Endothelial cell of umbilical vein (primary cell): ENCODE measurements at regions of chr16 and their contacts with region 1.

Region 1: DNA sequence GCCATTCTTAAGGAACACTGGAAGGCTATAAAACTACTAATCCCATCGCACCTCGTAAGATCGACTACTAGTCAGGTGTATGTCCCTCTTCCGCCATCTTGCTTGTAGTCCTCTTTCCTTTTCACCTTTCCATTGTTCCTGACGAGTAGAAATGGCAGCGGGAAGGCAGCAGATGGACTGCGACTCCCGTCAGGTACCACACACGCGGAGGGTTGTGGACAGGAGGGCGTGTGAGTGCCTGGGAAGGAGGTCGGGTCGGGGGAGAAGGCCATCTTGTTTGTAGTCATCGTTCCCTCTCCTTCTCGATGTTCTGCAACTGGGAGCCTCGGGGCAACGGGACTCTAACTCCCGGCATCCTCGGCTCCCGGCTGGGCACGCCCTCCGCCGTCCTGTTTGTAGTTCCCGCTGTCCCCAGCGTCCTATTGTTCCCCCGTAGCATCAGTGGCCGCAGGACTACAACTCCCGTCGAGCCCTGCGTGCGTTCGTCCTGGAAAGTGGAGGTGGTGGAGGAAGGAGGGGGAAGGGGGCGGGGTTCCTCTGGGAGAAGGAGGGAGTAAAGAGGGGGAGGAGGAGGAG is 324 bp upstream of the FBXL19 start:
- DNase-seq: peak; percentile 100
- H3K4me3 ChIP-seq: peak overlapping the region; percentile 3 to 87 (median 65)
- H3K27ac ChIP-seq: peak overlapping the region; percentile 66
- H3K4me1 ChIP-seq: peaks cover 2% of the 10 kb centered on the region
- H3K27me3 ChIP-seq: no peaks in the 10 kb centered on the region
- CTCF ChIP-seq: no peak
- POLR2A ChIP-seq: peak; percentile 9

Region 2: DNA sequence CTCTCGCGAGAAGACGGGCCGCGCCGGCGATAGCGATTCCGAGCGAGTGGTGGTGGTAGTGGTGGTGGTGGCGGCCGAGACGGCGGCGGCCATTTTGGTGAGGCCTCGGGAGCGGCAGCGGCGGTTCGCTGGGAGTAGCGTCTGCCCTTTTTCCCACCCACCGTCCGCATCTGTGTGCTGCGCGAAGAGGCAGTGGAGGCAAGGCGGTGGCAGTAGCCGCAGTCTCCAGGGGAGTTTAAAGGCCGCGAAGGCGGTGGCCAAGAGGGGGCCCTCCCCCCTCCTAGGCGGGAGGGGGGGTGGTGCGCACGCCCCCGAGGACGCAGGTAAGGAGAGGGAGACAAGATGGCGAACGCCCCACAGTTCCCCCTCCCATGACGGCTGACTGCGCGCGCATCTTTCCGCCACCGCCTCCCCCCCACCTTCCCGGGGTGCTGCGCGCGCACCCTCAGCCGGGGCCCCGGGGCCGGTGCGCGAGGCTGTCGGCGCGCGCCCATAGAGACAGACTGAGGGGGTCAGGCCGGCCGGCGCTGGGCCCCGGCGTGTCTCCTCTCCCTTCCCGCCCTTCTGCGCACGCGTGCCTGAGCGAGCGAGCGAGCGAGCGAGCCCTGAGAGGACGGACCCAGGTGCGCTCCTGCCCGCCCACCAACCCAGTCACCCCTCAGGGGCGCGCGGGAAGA is 224.8 kb before region 1 on chr16:
- CTCF ChIA-PET with region 1: no interaction called
- POLR2A ChIA-PET with region 1: no interaction called
- dilution Hi-C with region 1: no loop called
- intact Hi-C with region 1: loop called (anchors 2 kb)
- DNase-seq: peak; percentile 96
- H3K4me3 ChIP-seq: peak overlapping the region; percentile 49 to 99 (median 77)
- H3K27ac ChIP-seq: peak overlapping the region; percentile 94
- H3K4me1 ChIP-seq: peaks cover 26% of the 10 kb centered on the region
- H3K27me3 ChIP-seq: no peaks in the 10 kb centered on the region
- CTCF ChIP-seq: no peak
- POLR2A ChIP-seq: peak; percentile 94

Region 3: DNA sequence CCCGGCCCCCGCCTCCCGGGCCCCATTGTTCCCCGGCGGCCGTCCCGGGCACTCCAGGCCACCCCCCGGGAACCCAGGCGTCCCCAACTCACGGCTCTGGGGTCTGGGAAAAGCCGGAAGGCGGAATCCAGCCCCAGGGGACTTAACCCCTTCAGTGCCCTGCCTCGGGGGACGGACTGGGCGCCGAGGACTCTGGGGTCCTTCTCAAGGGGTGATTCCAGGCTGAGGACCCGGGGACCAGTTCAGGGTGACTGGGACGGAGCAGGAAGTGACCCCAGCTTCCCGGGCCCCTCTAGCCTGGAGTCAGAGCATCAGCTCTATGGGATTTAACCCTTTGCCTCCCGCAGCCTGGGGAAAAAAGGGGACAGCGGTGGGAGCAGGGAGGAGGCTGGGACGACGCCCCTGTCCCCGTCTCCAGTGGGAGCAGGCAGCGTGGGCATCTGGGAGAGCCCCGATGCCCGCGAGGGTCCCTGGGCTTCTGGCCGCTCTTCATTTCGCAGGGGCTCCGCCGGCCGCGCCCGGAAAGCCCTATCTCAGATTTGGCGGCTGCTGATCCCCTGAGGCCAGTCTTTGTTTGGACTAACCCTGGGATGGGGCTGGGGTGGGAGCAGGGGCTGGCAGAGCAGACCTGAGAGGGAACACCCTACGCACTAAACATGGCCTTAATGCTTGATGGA is 136.0 kb before region 1 on chr16 and contains the start of gene ZNF629:
- CTCF ChIA-PET with region 1: no interaction called
- POLR2A ChIA-PET with region 1: no interaction called
- dilution Hi-C with region 1: no loop called
- intact Hi-C with region 1: loop called (anchors 1 kb)
- DNase-seq: peak; percentile 45
- H3K4me3 ChIP-seq: peak within 1 kb of the TSS; percentile 70 to 91 (median 91)
- H3K27ac ChIP-seq: peak within 1 kb of the TSS; percentile 89
- H3K4me1 ChIP-seq: peaks cover 14% of the 10 kb centered on the region
- H3K27me3 ChIP-seq: no peaks in the 10 kb centered on the region
- CTCF ChIP-seq: no peak
- POLR2A ChIP-seq: no peak
- total RNA-seq, gene ZNF629: 11.2 and 11.7 TPM in 2 replicates

Region 4: DNA sequence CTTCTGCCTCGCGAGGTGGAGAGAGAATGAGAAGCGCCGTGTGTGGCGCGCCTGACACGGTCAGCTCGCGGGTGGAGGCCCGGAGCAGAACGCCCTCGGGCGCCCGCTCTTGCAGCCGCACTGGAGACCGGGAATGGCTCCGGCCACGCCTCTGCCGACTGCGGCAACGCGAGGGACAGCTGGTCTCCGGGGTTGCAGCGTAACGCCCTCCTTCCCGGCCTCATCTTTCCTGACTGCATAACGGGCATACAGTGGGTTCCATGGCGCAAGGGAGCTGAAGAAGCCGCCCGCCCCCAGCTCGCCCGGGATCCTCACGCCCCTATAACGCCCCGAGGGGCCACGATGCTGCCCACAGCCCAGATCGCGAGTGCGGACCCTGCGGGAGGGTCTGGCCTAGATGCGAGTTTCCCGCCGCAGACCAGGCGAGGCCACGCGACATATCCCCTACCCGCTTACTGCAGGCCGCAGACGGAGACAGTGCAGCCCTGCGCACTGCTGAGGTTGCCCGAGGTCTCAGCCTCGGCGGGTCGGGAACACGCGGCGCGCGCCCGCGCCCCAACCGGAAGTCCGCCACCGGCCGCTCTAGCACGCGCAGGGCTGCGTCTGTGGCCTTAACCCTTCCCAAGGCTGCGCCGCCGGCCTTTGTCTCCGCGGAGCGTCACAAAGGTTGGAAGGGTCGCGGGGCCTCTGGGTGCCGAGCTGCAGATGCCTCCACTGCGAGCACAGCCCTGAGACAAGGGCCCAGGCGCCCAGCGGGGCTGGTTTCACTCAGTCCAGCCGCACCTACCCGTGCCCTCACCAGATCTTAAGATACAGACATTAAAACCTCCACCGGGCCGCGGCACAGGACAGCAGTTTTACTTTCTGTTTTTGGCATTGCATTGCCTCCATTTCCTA is 48.0 kb before region 1 on chr16:
- CTCF ChIA-PET with region 1: interaction called, 4 read pairs
- POLR2A ChIA-PET with region 1: no interaction called
- dilution Hi-C with region 1: no loop called
- intact Hi-C with region 1: loop called (anchors 1 kb)
- DNase-seq: peak; percentile 91
- H3K4me3 ChIP-seq: peak overlapping the region; percentile 66 to 83 (median 80)
- H3K27ac ChIP-seq: peak overlapping the region; percentile 85
- H3K4me1 ChIP-seq: peaks cover 20% of the 10 kb centered on the region
- H3K27me3 ChIP-seq: no peaks in the 10 kb centered on the region
- CTCF ChIP-seq: no peak
- POLR2A ChIP-seq: peak; percentile 99

Region 5: DNA sequence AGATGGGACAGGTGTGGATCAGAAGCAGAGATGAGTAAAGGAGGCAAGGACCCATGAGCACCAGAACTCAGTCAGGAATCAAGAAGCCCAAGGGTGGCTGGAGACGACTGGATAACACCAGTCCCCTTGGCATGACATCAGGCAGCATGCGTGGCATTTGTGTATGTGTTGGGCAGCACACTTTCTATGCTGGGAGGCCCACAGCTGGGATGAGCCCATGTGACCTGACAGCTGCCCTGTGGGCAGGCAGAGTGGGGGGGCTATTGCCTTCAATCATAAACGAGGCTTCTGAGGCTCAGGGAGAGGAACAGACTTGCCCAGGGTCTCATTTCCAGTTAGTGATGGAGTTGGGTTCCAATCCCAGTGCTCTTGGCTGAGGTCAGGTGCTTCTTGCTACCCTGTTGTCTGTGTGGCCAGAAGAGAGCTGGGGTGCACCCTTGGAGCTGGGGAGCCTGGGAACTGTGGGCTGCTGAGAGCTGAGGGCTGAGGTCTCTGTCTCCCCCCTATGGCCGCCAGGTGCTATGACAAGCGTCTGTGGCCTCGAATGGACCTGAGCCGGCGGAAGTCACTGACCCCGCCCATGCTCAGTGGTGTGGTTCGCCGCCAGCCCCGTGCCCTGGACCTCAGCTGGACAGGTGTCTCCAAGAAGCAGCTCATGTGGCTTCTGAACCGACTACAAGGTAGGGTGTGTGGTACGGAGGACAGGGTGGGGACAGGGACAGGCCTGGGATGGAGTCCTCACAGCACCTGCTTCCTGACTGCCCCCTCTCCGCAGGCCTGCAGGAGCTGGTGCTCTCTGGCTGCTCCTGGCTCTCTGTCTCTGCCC is 18.8 kb after region 1 on chr16:
- CTCF ChIA-PET with region 1: interaction called, 5 read pairs
- POLR2A ChIA-PET with region 1: no interaction called
- dilution Hi-C with region 1: no loop called
- intact Hi-C with region 1: loop called (anchors 1 kb)
- DNase-seq: peak; percentile 75
- H3K4me3 ChIP-seq: no peak overlapping the region
- H3K27ac ChIP-seq: no peak overlapping the region
- H3K4me1 ChIP-seq: peaks cover 2% of the 10 kb centered on the region
- H3K27me3 ChIP-seq: no peaks in the 10 kb centered on the region
- CTCF ChIP-seq: peak; percentile 90 to 96
- POLR2A ChIP-seq: no peak